Esophagus muscularis mucosa (tissue), 4 donors: ENCODE measurements at regions of chr5 and their contacts with region 1.

Region 1: DNA sequence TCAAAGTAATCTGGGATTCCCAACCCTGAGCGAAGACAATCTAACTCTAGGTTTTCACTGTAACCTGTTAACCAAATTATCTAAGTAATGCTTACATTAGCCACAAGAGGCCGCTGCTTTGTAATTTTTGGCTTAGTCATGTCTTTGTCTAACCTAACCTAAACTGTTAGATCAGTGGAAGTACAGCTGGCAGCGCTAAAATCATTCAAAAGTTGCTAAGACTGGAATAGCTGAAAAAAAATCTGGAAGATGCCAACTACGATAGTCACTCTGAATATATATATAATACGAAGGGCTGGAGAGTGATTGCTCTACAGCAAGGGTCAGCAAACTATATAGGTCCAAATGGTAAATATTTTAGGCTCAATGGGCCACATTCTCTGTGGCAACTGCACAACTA is 60.2 kb downstream of the FBXO38 start:
- DNase-seq: no peak
- H3K4me3 ChIP-seq: no peak overlapping the region
- H3K27ac ChIP-seq: no peak overlapping the region
- H3K4me1 ChIP-seq: peaks cover 0 to under 1% (median 0%) of the 10 kb centered on the region in 4 donors
- H3K27me3 ChIP-seq: no peaks in the 10 kb centered on the region
- CTCF ChIP-seq: peak; percentile 70 to 74 (median 74)
- EP300 ChIP-seq: no peak
- POLR2A ChIP-seq: no peak

Region 2: GRCh38 chr5:148482691-148483462 is 38.9 kb after region 1 on chr5:
- intact Hi-C with region 1: loop called (anchors 5 kb)
- DNase-seq: no peak
- H3K4me3 ChIP-seq: no peak overlapping the region
- H3K27ac ChIP-seq: no peak overlapping the region
- H3K4me1 ChIP-seq: peaks cover 0 to 11% (median 7%) of the 10 kb centered on the region in 4 donors
- H3K27me3 ChIP-seq: peaks cover 0 to 13% (median 2%) of the 10 kb centered on the region in 4 donors
- CTCF ChIP-seq: peak; percentile 50 to 75 (median 70)
- EP300 ChIP-seq: no peak
- POLR2A ChIP-seq: no peak

Region 3: DNA sequence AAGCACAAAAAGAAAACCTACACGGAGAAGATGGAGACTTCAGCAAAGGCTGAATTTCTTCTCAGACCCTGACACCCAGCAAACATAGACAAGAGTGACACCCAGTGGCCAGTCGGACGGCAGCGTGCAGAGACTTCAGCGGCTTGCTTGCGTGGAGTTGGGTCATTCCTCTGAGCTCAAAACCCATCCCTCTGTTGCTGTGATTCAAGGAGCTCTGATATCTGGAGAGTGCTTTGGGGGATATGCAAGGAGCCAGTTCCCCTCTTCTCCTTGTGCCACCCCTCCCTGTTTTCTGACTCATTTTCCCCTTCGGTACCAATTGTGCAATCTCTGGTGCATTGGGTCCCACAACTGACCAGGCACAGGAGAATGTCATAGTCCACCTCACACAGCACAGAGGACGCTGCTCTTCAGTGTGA is 591.4 kb after region 1 on chr5:
- intact Hi-C with region 1: loop called (anchors 10 kb)
- DNase-seq: peak; percentile 92
- H3K4me3 ChIP-seq: no peak overlapping the region
- H3K27ac ChIP-seq: no peak overlapping the region
- H3K4me1 ChIP-seq: peaks cover 0 to 7% (median 3%) of the 10 kb centered on the region in 4 donors
- H3K27me3 ChIP-seq: no peaks in the 10 kb centered on the region
- CTCF ChIP-seq: peak; percentile 77 to 86 (median 84)
- EP300 ChIP-seq: no peak
- POLR2A ChIP-seq: no peak